Ascending aorta (tissue), 2 donors: ENCODE measurements at regions of chr11 and their contacts with region 1.

Region 1: GRCh38 chr11:93741094-93741881 is at the starts of genes C11orf54 and TAF1D:
- DNase-seq: peak; percentile 91 to 99
- H3K4me3 ChIP-seq: peak within 1 kb of the TSS; percentile 88 to 91
- H3K27ac ChIP-seq: peak within 1 kb of the TSS; percentile 93 to 94
- H3K4me1 ChIP-seq: peaks cover 19 to 45% of the 10 kb centered on the region in 2 donors
- H3K27me3 ChIP-seq: no peaks in the 10 kb centered on the region
- CTCF ChIP-seq: peak in 1 of 3 experiments; percentile 6
- total RNA-seq, gene C11orf54: 3.9 TPM
- total RNA-seq, gene TAF1D: 81.1 TPM

Region 2: GRCh38 chr11:93570759-93571413 is 170.4 kb before region 1 on chr11:
- intact Hi-C with region 1: loop called (anchors 10 kb)
- DNase-seq: peak in 1 of 2 donors; percentile 77
- H3K4me3 ChIP-seq: no peak overlapping the region
- H3K27ac ChIP-seq: no peak overlapping the region
- H3K4me1 ChIP-seq: peaks cover 0 to 7% of the 10 kb centered on the region in 2 donors
- H3K27me3 ChIP-seq: no peaks in the 10 kb centered on the region
- CTCF ChIP-seq: no peak

Region 3: GRCh38 chr11:93662177-93662575 is 79.1 kb before region 1 on chr11:
- intact Hi-C with region 1: loop called (anchors 5 kb)
- DNase-seq: no peak
- H3K4me3 ChIP-seq: peak overlapping the region; percentile 83 to 93
- H3K27ac ChIP-seq: peak overlapping the region; percentile 74 to 83
- H3K4me1 ChIP-seq: no peaks in the 10 kb centered on the region
- H3K27me3 ChIP-seq: no peaks in the 10 kb centered on the region
- CTCF ChIP-seq: no peak

Region 4: GRCh38 chr11:93784152-93784934 is 43.1 kb after region 1 on chr11 and contains the start of gene MED17:
- intact Hi-C with region 1: loop called (anchors 1 kb)
- DNase-seq: peak; percentile 60 to 95
- H3K4me3 ChIP-seq: peak within 1 kb of the TSS; percentile 96 to 97
- H3K27ac ChIP-seq: peak within 1 kb of the TSS; percentile 91 to 97
- H3K4me1 ChIP-seq: peaks cover 13 to 20% of the 10 kb centered on the region in 2 donors
- H3K27me3 ChIP-seq: no peaks in the 10 kb centered on the region
- CTCF ChIP-seq: peak; percentile 33 to 47 (median 38)
- total RNA-seq, gene MED17: 12.6 TPM